CD4-positive, alpha-beta T cell (primary cell): ENCODE measurements at regions of chr13 and their contacts with region 1.

Region 1: DNA sequence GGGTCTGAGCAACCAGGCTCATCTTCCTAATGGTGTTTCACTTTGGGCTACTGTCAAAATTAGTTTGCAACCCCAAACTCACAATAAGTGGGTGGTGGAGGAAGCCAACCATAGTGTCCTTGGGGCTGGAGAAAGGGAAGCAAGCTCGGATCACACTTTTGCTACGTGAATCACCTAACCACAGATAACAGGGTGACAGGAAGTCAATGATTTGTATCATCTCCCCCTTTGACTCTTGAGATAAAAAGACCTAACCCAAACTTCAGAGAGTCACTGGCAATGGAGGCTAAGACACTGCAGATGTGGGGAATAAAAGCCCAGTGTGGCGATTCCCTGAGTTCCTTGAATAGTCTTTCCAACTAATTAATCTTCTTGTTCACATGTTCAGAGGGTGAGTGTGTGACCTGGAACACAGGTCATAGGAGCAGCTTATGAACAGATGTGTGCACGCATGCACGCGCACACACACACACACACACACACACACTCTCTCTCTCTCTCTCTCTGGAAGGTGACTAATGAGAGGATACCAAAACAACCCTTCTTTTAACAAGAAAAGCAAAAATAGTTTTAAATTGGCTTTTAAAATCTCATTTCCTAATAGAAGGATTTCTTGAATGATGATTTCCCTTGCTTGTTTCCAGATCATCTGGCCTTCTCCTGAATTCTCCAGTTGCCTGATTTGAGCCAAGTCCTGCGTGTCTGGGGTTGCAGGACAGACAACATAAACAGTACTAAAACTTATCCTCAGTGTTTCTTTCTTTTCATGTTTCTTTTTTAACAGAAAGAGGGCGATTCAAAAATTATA is 21.2 kb upstream of the DOCK9 start:
- DNase-seq: peak in 10 of 14 experiments; percentile 9 to 73 (median 29)
- ATAC-seq: peak; percentile 71
- H3K4me3 ChIP-seq: no peak overlapping the region
- H3K4me3 Mint-ChIP-seq: peak overlapping the region; percentile 85
- H3K27ac ChIP-seq: peak overlapping the region in 1 of 2 donors; percentile 14
- H3K27ac Mint-ChIP-seq: peak overlapping the region; percentile 94
- H3K4me1 ChIP-seq: peaks cover 81% of the 10 kb centered on the region
- H3K4me1 Mint-ChIP-seq: peaks cover 99% of the 10 kb centered on the region
- H3K27me3 ChIP-seq: no peaks in the 10 kb centered on the region
- H3K27me3 Mint-ChIP-seq: no peaks in the 10 kb centered on the region
- CTCF ChIP-seq: no peak

Region 2: DNA sequence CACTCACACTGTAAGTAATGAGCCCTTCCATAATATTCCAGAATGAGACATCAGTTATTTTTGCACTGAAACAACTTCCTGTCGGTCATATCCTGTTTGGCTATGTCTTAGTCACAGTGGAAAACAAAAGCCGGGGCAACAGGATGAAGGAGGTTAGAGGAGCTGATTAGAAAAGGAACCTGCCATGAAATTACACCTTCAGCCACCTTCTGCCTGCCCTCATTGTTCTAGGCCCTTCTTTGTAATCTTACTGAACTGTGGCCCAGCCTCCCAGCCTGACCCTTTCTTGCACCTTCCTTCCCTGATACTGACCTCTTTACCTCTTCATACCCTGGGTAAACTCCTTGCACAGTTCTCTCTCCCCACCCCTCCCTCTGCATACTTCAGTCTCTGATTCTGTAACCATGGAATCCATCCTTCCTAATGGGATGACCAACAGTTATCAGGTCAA is 88.5 kb before region 1 on chr13:
- CTCF ChIA-PET with region 1: no interaction called
- POLR2A ChIA-PET with region 1: no interaction called
- intact Hi-C with region 1: loop called in 1 of 2 experiments (anchors 10 kb)
- DNase-seq: peak in 10 of 14 experiments; percentile 5 to 77 (median 24)
- ATAC-seq: peak; percentile 87
- H3K4me3 ChIP-seq: no peak overlapping the region
- H3K4me3 Mint-ChIP-seq: peak overlapping the region; percentile 70
- H3K27ac ChIP-seq: peak overlapping the region in 1 of 2 donors; percentile 4
- H3K27ac Mint-ChIP-seq: peak overlapping the region; percentile 91
- H3K4me1 ChIP-seq: peaks cover 8% of the 10 kb centered on the region
- H3K4me1 Mint-ChIP-seq: peaks cover 39% of the 10 kb centered on the region
- H3K27me3 ChIP-seq: no peaks in the 10 kb centered on the region
- H3K27me3 Mint-ChIP-seq: no peaks in the 10 kb centered on the region
- CTCF ChIP-seq: no peak

Region 3: DNA sequence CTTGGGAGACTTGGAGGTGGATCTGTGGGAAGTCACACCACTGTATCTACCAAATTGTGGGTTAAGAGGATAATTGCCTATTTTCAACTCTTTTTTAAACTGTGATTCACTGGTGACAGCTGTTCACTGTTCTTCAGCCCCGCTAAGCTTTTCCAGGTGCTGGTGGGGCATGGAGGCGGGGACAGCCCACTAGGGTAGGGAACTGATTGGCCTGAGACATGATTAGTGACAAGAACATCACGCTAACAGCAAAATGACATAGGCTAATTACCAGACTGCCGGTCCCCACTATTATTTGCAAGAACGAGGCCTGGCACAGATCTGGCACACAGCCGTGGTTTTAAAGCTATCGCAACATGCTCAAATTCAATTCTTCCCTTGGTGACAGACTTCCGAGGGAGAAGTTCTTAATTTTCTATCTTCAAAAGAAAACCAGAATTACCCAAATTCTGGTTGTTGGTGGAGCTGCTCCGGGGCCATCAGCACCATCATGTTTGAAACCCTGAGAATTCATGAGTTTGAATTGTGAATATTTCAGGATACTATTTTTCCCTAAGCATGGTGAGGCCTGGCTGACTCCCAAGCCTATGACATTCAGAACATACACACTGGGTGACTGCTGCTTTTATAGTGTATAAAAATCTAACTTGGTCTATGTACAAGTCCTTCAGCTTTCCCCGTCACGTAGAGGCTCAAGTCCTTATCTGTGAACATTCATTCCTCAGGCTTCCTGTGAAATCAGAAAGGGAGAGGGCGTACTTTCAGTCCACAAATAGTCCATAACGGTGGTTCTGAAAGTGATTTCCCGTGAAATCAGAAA is 39.0 kb before region 1 on chr13:
- CTCF ChIA-PET with region 1: no interaction called
- POLR2A ChIA-PET with region 1: no interaction called
- intact Hi-C with region 1: no loop called
- DNase-seq: no peak
- ATAC-seq: no peak
- H3K4me3 ChIP-seq: no peak overlapping the region
- H3K4me3 Mint-ChIP-seq: no peak overlapping the region
- H3K27ac ChIP-seq: no peak overlapping the region
- H3K27ac Mint-ChIP-seq: peak overlapping the region; percentile 10
- H3K4me1 ChIP-seq: no peaks in the 10 kb centered on the region
- H3K4me1 Mint-ChIP-seq: peaks cover 25% of the 10 kb centered on the region
- H3K27me3 ChIP-seq: no peaks in the 10 kb centered on the region
- H3K27me3 Mint-ChIP-seq: no peaks in the 10 kb centered on the region
- CTCF ChIP-seq: no peak

Region 4: DNA sequence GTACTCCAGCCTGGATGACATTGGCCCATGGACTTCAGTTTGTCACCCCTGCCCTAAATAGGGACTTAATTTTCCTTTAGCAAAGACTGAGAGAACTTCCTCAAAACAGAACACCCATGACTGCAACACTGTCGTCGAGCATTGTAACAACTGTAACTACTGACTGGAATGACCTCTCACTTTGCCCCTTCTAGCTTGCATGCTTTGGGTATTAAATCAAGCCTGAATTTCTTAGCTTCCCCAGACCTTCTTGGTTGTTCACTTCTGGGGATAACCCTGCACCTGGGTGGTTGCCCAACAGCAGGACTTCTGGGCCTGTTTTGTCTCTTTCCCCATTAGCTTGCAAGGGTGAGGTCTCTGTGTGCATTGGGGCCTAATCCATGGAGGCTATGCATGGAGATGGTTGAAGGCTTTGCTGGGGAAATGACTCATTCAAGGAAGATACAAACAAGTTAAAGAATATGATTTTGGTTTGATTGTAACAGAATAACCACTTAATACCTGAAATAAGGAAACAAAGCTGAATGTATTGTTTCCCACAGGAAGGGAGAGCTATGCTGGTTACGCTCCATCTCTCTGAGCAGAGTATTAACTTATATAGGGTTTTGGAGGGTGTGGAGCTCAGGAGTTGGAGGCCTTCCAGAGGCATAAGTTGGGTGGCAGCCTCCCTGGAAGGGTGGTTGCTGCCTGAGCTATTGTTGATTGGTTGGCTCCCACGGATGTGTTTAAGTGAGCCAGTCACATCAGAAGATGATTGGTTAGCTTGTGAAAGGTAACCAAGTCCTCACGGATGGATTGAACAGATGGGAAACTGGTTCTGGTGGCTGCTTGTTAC is 166.9 kb after region 1 on chr13:
- CTCF ChIA-PET with region 1: no interaction called
- POLR2A ChIA-PET with region 1: no interaction called
- intact Hi-C with region 1: no loop called
- DNase-seq: no peak
- ATAC-seq: no peak
- H3K4me3 ChIP-seq: no peak overlapping the region
- H3K4me3 Mint-ChIP-seq: no peak overlapping the region
- H3K27ac ChIP-seq: no peak overlapping the region
- H3K27ac Mint-ChIP-seq: no peak overlapping the region
- H3K4me1 ChIP-seq: no peaks in the 10 kb centered on the region
- H3K4me1 Mint-ChIP-seq: no peaks in the 10 kb centered on the region
- H3K27me3 ChIP-seq: peaks cover 0 to 2% of the 10 kb centered on the region in 2 experiments
- H3K27me3 Mint-ChIP-seq: no peaks in the 10 kb centered on the region
- CTCF ChIP-seq: no peak